ENCODE measurements at regions of chr2 and their contacts with region 1.

Region 1: GRCh38 chr2:42169100-42169873 is at the start of gene EML4:
- DNase-seq: peak; percentile 79 to 95 (median 89)
- ATAC-seq: peak; percentile 87
- H3K4me3 ChIP-seq: peak within 1 kb of the TSS; percentile 96
- H3K4me3 Mint-ChIP-seq: no peak within 1 kb of the TSS
- H3K27ac ChIP-seq: peak within 1 kb of the TSS; percentile 88 to 93
- H3K27ac Mint-ChIP-seq: no peak within 1 kb of the TSS
- H3K4me1 ChIP-seq: peaks cover 17% of the 10 kb centered on the region
- H3K4me1 Mint-ChIP-seq: peaks cover 9% of the 10 kb centered on the region
- H3K27me3 ChIP-seq: no peaks in the 10 kb centered on the region
- H3K27me3 Mint-ChIP-seq: no peaks in the 10 kb centered on the region
- CTCF ChIP-seq: no peak
- total RNA-seq, gene EML4: 219 to 228 TPM

Region 2: GRCh38 chr2:41896186-41896846 is 273.0 kb before region 1 on chr2:
- CTCF ChIA-PET with region 1: no interaction called
- POLR2A ChIA-PET with region 1: no interaction called
- intact Hi-C with region 1: no loop called
- DNase-seq: peak in 6 of 14 experiments; percentile 3 to 81 (median 36)
- ATAC-seq: peak; percentile 62
- H3K4me3 ChIP-seq: no peak overlapping the region
- H3K4me3 Mint-ChIP-seq: no peak overlapping the region
- H3K27ac ChIP-seq: no peak overlapping the region
- H3K27ac Mint-ChIP-seq: peak overlapping the region; percentile 74
- H3K4me1 ChIP-seq: peaks cover 53% of the 10 kb centered on the region
- H3K4me1 Mint-ChIP-seq: peaks cover 12% of the 10 kb centered on the region
- H3K27me3 ChIP-seq: no peaks in the 10 kb centered on the region
- H3K27me3 Mint-ChIP-seq: no peaks in the 10 kb centered on the region
- CTCF ChIP-seq: no peak

Region 3: GRCh38 chr2:42127425-42128424 is 41.6 kb before region 1 on chr2:
- CTCF ChIA-PET with region 1: interaction called, 3 read pairs
- POLR2A ChIA-PET with region 1: interaction called, 41 read pairs
- intact Hi-C with region 1: loop called in 1 of 2 experiments (anchors 5 kb)
- DNase-seq: peak in 10 of 14 experiments; percentile 20 to 77 (median 40)
- ATAC-seq: peak; percentile 45
- H3K4me3 ChIP-seq: peak overlapping the region; percentile 2
- H3K4me3 Mint-ChIP-seq: peak overlapping the region; percentile 83
- H3K27ac ChIP-seq: peak overlapping the region; percentile 56 to 62
- H3K27ac Mint-ChIP-seq: peak overlapping the region; percentile 86
- H3K4me1 ChIP-seq: peaks cover 94% of the 10 kb centered on the region
- H3K4me1 Mint-ChIP-seq: peaks cover 91% of the 10 kb centered on the region
- H3K27me3 ChIP-seq: no peaks in the 10 kb centered on the region
- H3K27me3 Mint-ChIP-seq: no peaks in the 10 kb centered on the region
- CTCF ChIP-seq: no peak

Region 4: GRCh38 chr2:42141687-42142546 is 27.4 kb before region 1 on chr2:
- CTCF ChIA-PET with region 1: no interaction called
- POLR2A ChIA-PET with region 1: interaction called, 12 read pairs
- intact Hi-C with region 1: no loop called
- DNase-seq: peak in 10 of 14 experiments; percentile 11 to 60 (median 36)
- ATAC-seq: peak; percentile 78
- H3K4me3 ChIP-seq: no peak overlapping the region
- H3K4me3 Mint-ChIP-seq: peak overlapping the region; percentile 65
- H3K27ac ChIP-seq: peak overlapping the region; percentile 18 to 19
- H3K27ac Mint-ChIP-seq: peak overlapping the region; percentile 85
- H3K4me1 ChIP-seq: peaks cover 60% of the 10 kb centered on the region
- H3K4me1 Mint-ChIP-seq: peaks cover 57% of the 10 kb centered on the region
- H3K27me3 ChIP-seq: no peaks in the 10 kb centered on the region
- H3K27me3 Mint-ChIP-seq: no peaks in the 10 kb centered on the region
- CTCF ChIP-seq: no peak

Region 5: GRCh38 chr2:42196403-42197267 is 27.3 kb after region 1 on chr2:
- CTCF ChIA-PET with region 1: interaction called, 8 read pairs
- POLR2A ChIA-PET with region 1: interaction called, 9 read pairs
- intact Hi-C with region 1: loop called in 1 of 2 experiments (anchors 2 kb)
- DNase-seq: peak in 12 of 14 experiments; percentile 16 to 79 (median 37)
- ATAC-seq: peak; percentile 82
- H3K4me3 ChIP-seq: no peak overlapping the region
- H3K4me3 Mint-ChIP-seq: peak overlapping the region; percentile 63
- H3K27ac ChIP-seq: no peak overlapping the region
- H3K27ac Mint-ChIP-seq: peak overlapping the region; percentile 61
- H3K4me1 ChIP-seq: peaks cover 48% of the 10 kb centered on the region
- H3K4me1 Mint-ChIP-seq: peaks cover 89% of the 10 kb centered on the region
- H3K27me3 ChIP-seq: no peaks in the 10 kb centered on the region
- H3K27me3 Mint-ChIP-seq: no peaks in the 10 kb centered on the region
- CTCF ChIP-seq: peak; percentile 92

Region 6: GRCh38 chr2:42360890-42361727 is 191.8 kb after region 1 on chr2 and contains the start of gene COX7A2L:
- CTCF ChIA-PET with region 1: no interaction called
- POLR2A ChIA-PET with region 1: no interaction called
- intact Hi-C with region 1: loop called in 1 of 2 experiments (anchors 5 kb)
- DNase-seq: peak; percentile 93 to 98 (median 96)
- ATAC-seq: peak; percentile 91
- H3K4me3 ChIP-seq: peak within 1 kb of the TSS; percentile 88
- H3K4me3 Mint-ChIP-seq: peak within 1 kb of the TSS; percentile 88
- H3K27ac ChIP-seq: peak within 1 kb of the TSS; percentile 91 to 96
- H3K27ac Mint-ChIP-seq: peak within 1 kb of the TSS; percentile 99
- H3K4me1 ChIP-seq: peaks cover 34% of the 10 kb centered on the region
- H3K4me1 Mint-ChIP-seq: peaks cover 45% of the 10 kb centered on the region
- H3K27me3 ChIP-seq: no peaks in the 10 kb centered on the region
- H3K27me3 Mint-ChIP-seq: no peaks in the 10 kb centered on the region
- CTCF ChIP-seq: no peak
- total RNA-seq, gene COX7A2L: 51.3 to 57.3 TPM